ENCODE measurements at regions of chrX and their contacts with region 1.

Region 1: DNA sequence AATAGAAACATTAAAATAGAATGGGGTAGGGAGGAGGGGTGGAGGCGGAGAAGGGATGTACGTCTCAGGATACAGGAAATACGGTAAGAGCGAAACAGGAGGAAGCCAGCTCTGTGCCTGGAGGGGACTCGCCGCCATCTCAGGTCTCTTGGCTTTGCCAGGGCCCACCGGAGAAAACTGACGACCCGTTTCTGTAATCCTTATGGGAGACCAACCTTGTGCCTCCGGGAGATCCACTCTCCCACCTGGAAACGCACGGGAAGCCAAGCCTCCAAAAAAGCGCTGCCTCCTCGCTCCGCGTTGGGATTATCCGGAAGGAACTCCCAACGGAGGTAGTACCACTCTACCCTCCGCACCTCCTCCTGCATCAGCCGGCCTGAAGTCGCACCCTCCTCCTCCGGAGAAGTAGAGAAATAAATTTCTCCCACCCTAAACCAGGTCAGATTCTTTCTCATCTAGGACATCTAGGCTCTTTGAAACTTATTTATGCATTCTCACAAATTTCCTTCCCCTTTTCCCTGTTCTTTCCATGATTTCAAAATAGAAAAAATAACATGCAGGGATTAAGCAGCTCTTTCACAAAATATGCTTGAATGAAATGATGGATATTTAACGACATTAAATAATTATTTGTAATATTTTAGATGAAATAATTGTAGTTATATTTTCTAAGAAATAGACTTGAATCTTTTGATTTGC is at the start of gene NBDY:
- DNase-seq: peak; percentile 4 to 32 (median 10)
- ATAC-seq: peak; percentile 93
- H3K4me3 ChIP-seq: peak within 1 kb of the TSS; percentile 45
- H3K27ac ChIP-seq: peak within 1 kb of the TSS; percentile 24; the same call in 1 of the 3 replicates
- H3K4me1 ChIP-seq: no peaks in the 10 kb centered on the region
- H3K27me3 ChIP-seq: no peaks in the 10 kb centered on the region
- CTCF ChIP-seq: no peak
- EP300 ChIP-seq: no peak
- POLR2A ChIP-seq: no peak
- RAD21 ChIP-seq: no peak
- polyA plus RNA-seq, gene NBDY: 24.2 to 24.7 TPM

Region 2: DNA sequence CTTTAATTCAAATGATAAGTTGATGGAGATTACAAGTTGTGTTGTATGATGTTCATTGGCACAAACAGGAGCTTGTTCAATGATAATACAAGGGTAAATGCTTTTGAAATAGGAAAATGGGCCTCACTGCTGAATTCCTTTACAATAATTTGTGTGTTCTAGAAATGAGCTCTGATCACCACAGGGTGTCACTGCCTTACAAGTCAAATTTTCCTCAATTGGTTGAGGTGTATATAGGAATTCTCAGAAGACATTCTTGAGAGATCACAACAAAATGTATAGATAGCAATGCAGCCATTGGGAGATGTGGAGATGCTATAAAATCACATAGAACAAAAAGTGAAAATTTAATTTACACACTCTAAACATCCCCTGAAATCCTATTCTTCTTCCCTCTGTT is 447.5 kb before region 1 on chrX:
- CTCF ChIA-PET with region 1: interaction called, 3 read pairs
- POLR2A ChIA-PET with region 1: no interaction called
- in situ Hi-C with region 1: loop called (anchors 25 kb)
- intact Hi-C with region 1: loop called (anchors 1 kb)
- DNase-seq: peak in 1 of 4 experiments; percentile 14
- ATAC-seq: no peak
- H3K4me3 ChIP-seq: no peak overlapping the region
- H3K27ac ChIP-seq: no peak overlapping the region
- H3K4me1 ChIP-seq: no peaks in the 10 kb centered on the region
- H3K27me3 ChIP-seq: no peaks in the 10 kb centered on the region
- CTCF ChIP-seq: peak; percentile 4 to 39 (median 17); a peak in 2 of 6 replicates
- EP300 ChIP-seq: no peak
- POLR2A ChIP-seq: no peak
- RAD21 ChIP-seq: peak; percentile 32 to 52

Region 3: GRCh38 chrX:56744996-56745395 is 15.7 kb after region 1 on chrX:
- CTCF ChIA-PET with region 1: no interaction called
- POLR2A ChIA-PET with region 1: no interaction called
- in situ Hi-C with region 1: no loop called
- intact Hi-C with region 1: no loop called
- DNase-seq: no peak
- ATAC-seq: no peak
- H3K4me3 ChIP-seq: no peak overlapping the region
- H3K27ac ChIP-seq: no peak overlapping the region
- H3K4me1 ChIP-seq: no peaks in the 10 kb centered on the region
- H3K27me3 ChIP-seq: no peaks in the 10 kb centered on the region
- CTCF ChIP-seq: no peak
- EP300 ChIP-seq: no peak
- POLR2A ChIP-seq: no peak
- RAD21 ChIP-seq: no peak

Measured in K562 (cell line).